Activated naive CD4-positive, alpha-beta T cell treated with anti-CD3 and anti-CD28 coated beads for 36 hours (primary cell): ENCODE measurements at regions of chr4 and their contacts with region 1.

Region 1: DNA sequence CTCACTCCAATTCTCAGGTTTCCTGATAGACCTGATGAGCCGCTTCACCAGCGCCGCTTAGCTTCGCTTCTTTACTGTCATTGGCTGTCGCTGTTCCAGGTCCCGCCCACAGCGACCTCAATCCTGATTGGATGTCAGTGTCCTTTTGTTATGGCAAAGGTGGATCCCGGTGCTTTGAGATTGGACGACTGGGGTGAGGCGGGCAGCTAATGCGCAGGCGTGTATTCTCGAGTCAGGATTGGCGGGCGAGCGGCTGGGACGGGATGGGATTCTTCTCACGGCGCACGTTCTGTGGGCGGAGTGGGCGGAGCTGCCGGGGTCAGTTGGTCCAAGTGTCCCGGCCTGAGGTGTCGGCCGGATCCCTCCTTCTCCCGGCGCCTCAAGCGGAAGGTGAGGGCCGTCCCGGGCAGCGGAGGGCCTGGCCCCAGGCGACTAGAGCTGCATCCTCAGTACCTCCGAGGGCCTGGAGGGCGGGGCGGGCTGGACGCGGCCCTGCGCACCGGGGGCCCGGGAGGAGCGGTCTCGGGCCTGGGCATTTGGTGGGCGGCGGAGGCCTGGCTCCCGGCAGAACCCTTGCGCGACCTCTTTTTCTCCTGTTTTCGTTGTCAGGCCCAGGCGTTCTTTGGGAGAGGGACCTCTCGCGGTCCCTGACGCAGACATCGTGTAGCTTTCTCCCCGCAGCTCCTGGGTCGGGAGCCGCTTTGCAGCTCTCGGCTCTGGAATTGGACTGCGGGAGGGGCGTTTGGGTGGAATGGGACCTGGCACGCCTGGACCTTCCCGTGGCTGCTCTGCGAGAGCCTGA is at the start of gene SCOC:
- DNase-seq: peak; percentile 99
- H3K4me3 Mint-ChIP-seq: no peak within 1 kb of the TSS
- H3K27ac Mint-ChIP-seq: peak within 1 kb of the TSS; percentile 69
- H3K4me1 Mint-ChIP-seq: peaks cover 33% of the 10 kb centered on the region
- H3K27me3 Mint-ChIP-seq: no peaks in the 10 kb centered on the region
- total RNA-seq, gene SCOC: 44.7 to 49.4 TPM

Region 2: DNA sequence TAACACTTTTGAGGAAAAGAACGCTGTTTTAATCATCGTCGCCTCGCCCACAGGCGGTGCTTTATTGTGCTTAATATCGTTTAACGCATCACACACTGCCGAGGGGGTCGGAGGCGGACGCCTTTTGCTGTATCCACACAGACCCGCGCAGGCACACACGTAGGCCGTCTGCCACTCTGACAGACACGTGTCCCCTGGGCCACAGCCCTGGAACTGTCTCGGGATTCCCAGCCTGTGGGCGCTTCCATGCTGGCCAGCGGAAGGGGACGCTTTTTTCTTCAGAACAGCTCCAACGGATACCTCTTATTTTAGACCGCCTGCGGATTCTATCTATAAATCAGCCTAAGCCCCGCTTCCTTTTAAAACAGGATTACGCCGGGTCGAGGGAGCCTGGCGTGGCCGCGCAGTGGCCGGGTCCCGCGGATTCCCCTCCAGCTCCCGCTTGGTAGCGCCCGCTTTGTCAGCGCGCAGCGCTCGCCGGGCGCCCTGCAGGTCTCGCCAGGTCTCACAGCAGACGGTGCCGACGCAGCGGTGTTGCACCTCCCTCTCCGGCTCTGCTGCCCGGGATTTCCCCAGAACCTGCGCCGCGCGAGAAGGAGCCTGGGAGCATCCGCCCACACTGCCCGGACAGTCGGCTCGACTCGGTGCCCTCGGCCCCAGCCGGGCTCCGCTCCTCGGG is 1358.1 kb before region 1 on chr4 and contains the start of gene NOCT:
- CTCF ChIA-PET with region 1: no interaction called
- intact Hi-C with region 1: loop called (anchors 5 kb)
- DNase-seq: peak; percentile 97
- H3K4me3 Mint-ChIP-seq: peak within 1 kb of the TSS; percentile 91
- H3K27ac Mint-ChIP-seq: peak within 1 kb of the TSS; percentile 96
- H3K4me1 Mint-ChIP-seq: peaks cover 48% of the 10 kb centered on the region
- H3K27me3 Mint-ChIP-seq: no peaks in the 10 kb centered on the region
- total RNA-seq, gene NOCT: 9.3 to 10.4 TPM

Region 3: GRCh38 chr4:139453371-139454110 is 920.0 kb before region 1 on chr4:
- CTCF ChIA-PET with region 1: no interaction called
- intact Hi-C with region 1: loop called (anchors 5 kb)
- DNase-seq: peak; percentile 98
- H3K4me3 Mint-ChIP-seq: peak overlapping the region; percentile 97
- H3K27ac Mint-ChIP-seq: peak overlapping the region; percentile 98
- H3K4me1 Mint-ChIP-seq: peaks cover 50% of the 10 kb centered on the region
- H3K27me3 Mint-ChIP-seq: no peaks in the 10 kb centered on the region

Region 4: GRCh38 chr4:140427106-140427961 is 53.8 kb after region 1 on chr4 and contains the start of gene CLGN:
- CTCF ChIA-PET with region 1: interaction called, 3 read pairs
- intact Hi-C with region 1: loop called (anchors 1 kb)
- DNase-seq: peak; percentile 51
- H3K4me3 Mint-ChIP-seq: peak within 1 kb of the TSS; percentile 76
- H3K27ac Mint-ChIP-seq: no peak within 1 kb of the TSS
- H3K4me1 Mint-ChIP-seq: peaks cover 5% of the 10 kb centered on the region
- H3K27me3 Mint-ChIP-seq: peaks cover 44% of the 10 kb centered on the region
- total RNA-seq, gene CLGN: 0.10 TPM in 1 of 2 experiments, not detected in the other

Region 5: DNA sequence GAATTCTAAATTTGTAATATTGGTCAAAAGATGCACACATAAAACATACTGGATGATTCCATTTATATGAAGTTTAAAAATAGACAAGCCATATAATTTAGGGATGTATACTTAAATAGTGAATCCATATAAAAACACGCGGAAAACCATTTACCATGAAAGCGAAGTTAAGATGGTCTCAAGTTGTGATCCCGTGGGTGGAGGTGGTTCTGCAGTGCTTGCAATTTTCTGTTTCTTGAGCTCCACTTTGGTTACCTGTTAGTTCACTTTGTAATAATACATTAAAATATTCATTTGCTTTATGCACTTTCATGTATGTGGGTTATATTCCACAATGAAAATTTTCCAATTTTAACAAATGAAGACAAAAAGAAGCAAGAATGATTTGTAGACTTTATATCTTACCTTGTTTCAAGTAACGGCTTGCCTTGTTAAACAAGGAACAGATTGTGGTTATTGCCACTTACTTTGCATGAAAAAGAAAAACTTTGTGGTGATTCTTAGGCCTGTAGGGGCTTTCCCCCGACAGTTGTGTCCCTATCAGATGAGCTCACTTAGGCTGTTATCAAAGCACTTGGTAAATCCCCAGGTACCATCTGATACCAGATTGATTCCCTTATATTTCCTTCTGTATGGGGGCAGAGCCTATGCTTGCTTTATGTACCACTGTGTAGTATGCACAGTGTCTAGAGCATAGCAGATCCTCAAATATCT is 183.0 kb after region 1 on chr4:
- CTCF ChIA-PET with region 1: no interaction called
- intact Hi-C with region 1: loop called (anchors 1 kb)
- DNase-seq: peak; percentile 48
- H3K4me3 Mint-ChIP-seq: no peak overlapping the region
- H3K27ac Mint-ChIP-seq: no peak overlapping the region
- H3K4me1 Mint-ChIP-seq: peaks cover 16% of the 10 kb centered on the region
- H3K27me3 Mint-ChIP-seq: peaks cover 8% of the 10 kb centered on the region

Region 6: GRCh38 chr4:140982613-140983340 is 609.2 kb after region 1 on chr4:
- CTCF ChIA-PET with region 1: no interaction called
- intact Hi-C with region 1: no loop called
- DNase-seq: no peak
- H3K4me3 Mint-ChIP-seq: no peak overlapping the region
- H3K27ac Mint-ChIP-seq: no peak overlapping the region
- H3K4me1 Mint-ChIP-seq: no peaks in the 10 kb centered on the region
- H3K27me3 Mint-ChIP-seq: no peaks in the 10 kb centered on the region

Region 7: GRCh38 chr4:141133146-141133998 is 759.8 kb after region 1 on chr4 and contains the start of gene RNF150:
- CTCF ChIA-PET with region 1: no interaction called
- intact Hi-C with region 1: loop called (anchors 10 kb)
- DNase-seq: peak; percentile 72
- H3K4me3 Mint-ChIP-seq: peak within 1 kb of the TSS; percentile 86
- H3K27ac Mint-ChIP-seq: no peak within 1 kb of the TSS
- H3K4me1 Mint-ChIP-seq: peaks cover 8% of the 10 kb centered on the region
- H3K27me3 Mint-ChIP-seq: peaks cover 70% of the 10 kb centered on the region
- total RNA-seq, gene RNF150: not detected